CD8-positive, alpha-beta T cell (primary cell): ENCODE measurements at regions of chr2 and their contacts with region 1.

Region 1: GRCh38 chr2:11129598-11130449 is 25.4 kb upstream of the SLC66A3 start:
- DNase-seq: peak; percentile 53 to 90 (median 81)
- ATAC-seq: peak; percentile 90
- H3K4me3 ChIP-seq: peak overlapping the region; percentile 42 to 49
- H3K4me3 Mint-ChIP-seq: peak overlapping the region; percentile 80
- H3K27ac ChIP-seq: peak overlapping the region in 1 of 2 experiments; percentile 61
- H3K27ac Mint-ChIP-seq: peak overlapping the region; percentile 88
- H3K4me1 ChIP-seq: peaks cover 23% of the 10 kb centered on the region
- H3K4me1 Mint-ChIP-seq: peaks cover 29% of the 10 kb centered on the region
- H3K27me3 ChIP-seq: no peaks in the 10 kb centered on the region
- H3K27me3 Mint-ChIP-seq: no peaks in the 10 kb centered on the region
- CTCF ChIP-seq: peak; percentile 36

Region 2: DNA sequence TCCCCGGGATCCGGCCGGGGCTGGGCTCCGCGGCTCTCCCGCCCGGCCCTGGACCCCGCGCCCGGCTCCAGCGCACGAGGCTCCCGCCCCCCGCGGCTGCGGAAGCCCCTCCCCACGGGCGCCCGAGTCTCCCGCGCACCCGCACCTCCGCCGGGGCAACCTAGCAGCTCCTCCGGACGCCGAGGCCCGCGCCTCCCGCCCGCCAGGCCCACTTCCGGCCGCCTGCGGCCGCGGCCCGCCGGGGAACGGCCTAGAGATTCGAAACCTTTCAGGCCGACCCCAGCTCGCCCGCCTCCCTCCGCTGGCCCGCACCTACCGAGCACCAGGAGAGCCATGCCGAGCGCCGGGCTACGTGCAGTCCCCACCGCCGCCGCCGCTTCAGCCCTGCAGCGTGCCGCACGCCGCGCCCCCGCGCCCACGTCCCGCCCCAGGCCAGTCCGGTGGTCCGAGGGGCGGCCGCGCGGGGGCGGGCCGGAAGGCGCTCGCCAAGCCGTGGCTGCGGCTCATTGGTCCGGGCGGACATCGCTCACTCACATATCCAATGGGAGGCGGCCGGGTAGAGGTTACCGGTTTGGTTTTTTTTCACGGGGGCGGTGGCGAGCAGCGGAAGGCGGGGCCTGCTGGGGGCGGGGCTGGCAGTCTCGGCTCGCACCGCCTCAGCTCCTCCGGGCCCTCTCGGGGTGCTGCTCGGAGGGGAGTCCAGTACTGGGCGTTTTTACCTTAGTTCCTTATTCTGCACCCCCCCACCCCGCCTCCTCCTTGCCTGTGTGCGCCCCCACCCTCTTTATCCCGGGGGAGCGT is 317.3 kb before region 1 on chr2 and contains the start of gene PDIA6:
- CTCF ChIA-PET with region 1: interaction called, 11 read pairs
- POLR2A ChIA-PET with region 1: interaction called, 5 read pairs
- intact Hi-C with region 1: loop called (anchors 1 to 5 kb)
- DNase-seq: peak; percentile 89 to 96 (median 93)
- ATAC-seq: peak; percentile 90
- H3K4me3 ChIP-seq: peak within 1 kb of the TSS; percentile 65 to 84
- H3K4me3 Mint-ChIP-seq: peak within 1 kb of the TSS; percentile 91
- H3K27ac ChIP-seq: peak within 1 kb of the TSS; percentile 56 to 73
- H3K27ac Mint-ChIP-seq: peak within 1 kb of the TSS; percentile 86
- H3K4me1 ChIP-seq: peaks cover 27% of the 10 kb centered on the region
- H3K4me1 Mint-ChIP-seq: peaks cover 41% of the 10 kb centered on the region
- H3K27me3 ChIP-seq: no peaks in the 10 kb centered on the region
- H3K27me3 Mint-ChIP-seq: peaks cover 1% of the 10 kb centered on the region
- CTCF ChIP-seq: no peak
- total RNA-seq, gene PDIA6: 24.4 to 24.8 TPM

Region 3: DNA sequence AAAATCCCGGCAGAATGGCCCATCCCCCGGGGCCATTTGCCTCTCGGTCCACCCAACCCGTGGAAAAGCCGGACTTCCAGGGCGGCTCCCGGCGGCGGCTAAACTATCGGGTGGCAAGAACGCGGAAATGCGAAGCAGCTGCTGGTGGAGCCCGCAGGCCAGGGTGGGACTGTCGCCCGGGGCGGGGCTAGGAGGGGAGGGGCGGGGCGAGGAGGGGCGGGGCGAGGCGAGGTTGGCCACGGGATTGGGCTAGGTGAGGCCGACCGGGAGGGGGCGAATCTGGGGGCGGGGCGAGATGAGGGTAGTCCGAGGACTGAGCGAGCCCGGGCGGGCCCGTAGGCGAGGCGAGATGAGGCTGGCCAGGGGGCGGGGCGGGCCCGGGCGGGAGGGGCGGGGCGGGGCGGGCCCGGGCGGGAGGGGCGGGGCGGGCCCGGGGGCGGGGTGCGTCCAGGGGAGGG is 25.1 kb after region 1 on chr2:
- CTCF ChIA-PET with region 1: interaction called, 22 read pairs
- POLR2A ChIA-PET with region 1: interaction called, 22 read pairs
- intact Hi-C with region 1: loop called (anchors 1 kb)
- DNase-seq: peak; percentile 96 to 99 (median 98)
- ATAC-seq: peak; percentile 91
- H3K4me3 ChIP-seq: peak overlapping the region; percentile 55 to 57
- H3K4me3 Mint-ChIP-seq: peak overlapping the region; percentile 80
- H3K27ac ChIP-seq: peak overlapping the region; percentile 68 to 78
- H3K27ac Mint-ChIP-seq: peak overlapping the region; percentile 85
- H3K4me1 ChIP-seq: peaks cover 18% of the 10 kb centered on the region
- H3K4me1 Mint-ChIP-seq: peaks cover 20% of the 10 kb centered on the region
- H3K27me3 ChIP-seq: no peaks in the 10 kb centered on the region
- H3K27me3 Mint-ChIP-seq: no peaks in the 10 kb centered on the region
- CTCF ChIP-seq: no peak

Region 4: GRCh38 chr2:11175293-11175795 is 45.5 kb after region 1 on chr2:
- CTCF ChIA-PET with region 1: no interaction called
- POLR2A ChIA-PET with region 1: no interaction called
- intact Hi-C with region 1: no loop called
- DNase-seq: no peak
- ATAC-seq: no peak
- H3K4me3 ChIP-seq: no peak overlapping the region
- H3K4me3 Mint-ChIP-seq: no peak overlapping the region
- H3K27ac ChIP-seq: no peak overlapping the region
- H3K27ac Mint-ChIP-seq: peak overlapping the region; percentile 13
- H3K4me1 ChIP-seq: peaks cover 7% of the 10 kb centered on the region
- H3K4me1 Mint-ChIP-seq: peaks cover 11% of the 10 kb centered on the region
- H3K27me3 ChIP-seq: no peaks in the 10 kb centered on the region
- H3K27me3 Mint-ChIP-seq: no peaks in the 10 kb centered on the region
- CTCF ChIP-seq: no peak

Region 5: DNA sequence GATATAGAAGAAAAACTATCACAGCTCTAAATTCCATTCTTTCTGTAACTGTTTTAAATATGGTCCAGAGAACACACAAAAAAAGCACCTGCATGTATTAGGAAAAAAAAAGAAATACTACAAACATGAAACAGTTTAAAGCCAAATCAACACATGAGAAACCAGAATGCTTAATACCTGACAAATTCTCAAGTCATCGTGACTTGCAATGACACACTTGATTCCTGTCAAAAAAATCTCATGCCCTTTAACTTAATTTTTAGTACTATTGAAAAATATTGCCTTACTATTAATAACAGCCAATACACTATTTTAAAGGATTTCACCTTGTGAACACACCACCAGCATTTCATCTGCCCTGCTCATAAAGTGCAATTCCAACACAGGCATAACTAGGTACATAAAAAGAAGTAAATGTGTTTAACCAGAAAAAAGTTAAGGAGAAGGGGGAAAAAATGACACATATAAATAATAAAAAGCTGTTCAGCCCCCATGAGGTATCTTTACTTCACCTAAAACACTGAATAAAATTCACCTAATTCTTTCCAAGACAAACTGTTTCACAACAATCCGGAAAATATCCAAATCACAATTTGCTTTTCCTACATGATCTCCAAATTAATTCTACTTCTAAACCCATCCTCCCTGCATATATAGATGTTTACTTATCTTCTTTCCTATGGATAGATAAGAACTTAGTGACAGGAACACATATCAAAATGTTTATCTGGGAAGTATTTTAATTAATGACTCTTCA is 203.8 kb after region 1 on chr2:
- CTCF ChIA-PET with region 1: no interaction called
- POLR2A ChIA-PET with region 1: no interaction called
- intact Hi-C with region 1: no loop called
- DNase-seq: no peak
- ATAC-seq: no peak
- H3K4me3 ChIP-seq: no peak overlapping the region
- H3K4me3 Mint-ChIP-seq: no peak overlapping the region
- H3K27ac ChIP-seq: no peak overlapping the region
- H3K27ac Mint-ChIP-seq: no peak overlapping the region
- H3K4me1 ChIP-seq: no peaks in the 10 kb centered on the region
- H3K4me1 Mint-ChIP-seq: peaks cover 12% of the 10 kb centered on the region
- H3K27me3 ChIP-seq: no peaks in the 10 kb centered on the region
- H3K27me3 Mint-ChIP-seq: no peaks in the 10 kb centered on the region
- CTCF ChIP-seq: no peak

Region 6: GRCh38 chr2:11344342-11344955 is 214.6 kb after region 1 on chr2 and contains the start of gene ROCK2:
- CTCF ChIA-PET with region 1: interaction called, 16 read pairs
- POLR2A ChIA-PET with region 1: interaction called, 4 read pairs
- intact Hi-C with region 1: loop called (anchors 1 to 5 kb)
- DNase-seq: peak; percentile 28 to 81 (median 62)
- ATAC-seq: peak; percentile 61
- H3K4me3 ChIP-seq: peak within 1 kb of the TSS; percentile 79 to 85
- H3K4me3 Mint-ChIP-seq: peak within 1 kb of the TSS; percentile 95
- H3K27ac ChIP-seq: peak within 1 kb of the TSS; percentile 37 to 43
- H3K27ac Mint-ChIP-seq: peak within 1 kb of the TSS; percentile 90
- H3K4me1 ChIP-seq: peaks cover 12% of the 10 kb centered on the region
- H3K4me1 Mint-ChIP-seq: peaks cover 42% of the 10 kb centered on the region
- H3K27me3 ChIP-seq: no peaks in the 10 kb centered on the region
- H3K27me3 Mint-ChIP-seq: no peaks in the 10 kb centered on the region
- CTCF ChIP-seq: no peak
- total RNA-seq, gene ROCK2: 4.1 to 5.7 TPM

Region 7: GRCh38 chr2:11465497-11466406 is 335.9 kb after region 1 on chr2 and contains the start of gene E2F6:
- CTCF ChIA-PET with region 1: interaction called, 33 read pairs
- POLR2A ChIA-PET with region 1: no interaction called
- intact Hi-C with region 1: loop called in 1 of 2 experiments (anchors 5 kb)
- DNase-seq: peak; percentile 68 to 91 (median 81)
- ATAC-seq: peak; percentile 85
- H3K4me3 ChIP-seq: peak within 1 kb of the TSS; percentile 83 to 87
- H3K4me3 Mint-ChIP-seq: peak within 1 kb of the TSS; percentile 96
- H3K27ac ChIP-seq: peak within 1 kb of the TSS; percentile 51 to 70
- H3K27ac Mint-ChIP-seq: peak within 1 kb of the TSS; percentile 91
- H3K4me1 ChIP-seq: peaks cover 13% of the 10 kb centered on the region
- H3K4me1 Mint-ChIP-seq: peaks cover 37% of the 10 kb centered on the region
- H3K27me3 ChIP-seq: no peaks in the 10 kb centered on the region
- H3K27me3 Mint-ChIP-seq: no peaks in the 10 kb centered on the region
- CTCF ChIP-seq: no peak
- total RNA-seq, gene E2F6: 4.9 to 5.0 TPM

Region 8: DNA sequence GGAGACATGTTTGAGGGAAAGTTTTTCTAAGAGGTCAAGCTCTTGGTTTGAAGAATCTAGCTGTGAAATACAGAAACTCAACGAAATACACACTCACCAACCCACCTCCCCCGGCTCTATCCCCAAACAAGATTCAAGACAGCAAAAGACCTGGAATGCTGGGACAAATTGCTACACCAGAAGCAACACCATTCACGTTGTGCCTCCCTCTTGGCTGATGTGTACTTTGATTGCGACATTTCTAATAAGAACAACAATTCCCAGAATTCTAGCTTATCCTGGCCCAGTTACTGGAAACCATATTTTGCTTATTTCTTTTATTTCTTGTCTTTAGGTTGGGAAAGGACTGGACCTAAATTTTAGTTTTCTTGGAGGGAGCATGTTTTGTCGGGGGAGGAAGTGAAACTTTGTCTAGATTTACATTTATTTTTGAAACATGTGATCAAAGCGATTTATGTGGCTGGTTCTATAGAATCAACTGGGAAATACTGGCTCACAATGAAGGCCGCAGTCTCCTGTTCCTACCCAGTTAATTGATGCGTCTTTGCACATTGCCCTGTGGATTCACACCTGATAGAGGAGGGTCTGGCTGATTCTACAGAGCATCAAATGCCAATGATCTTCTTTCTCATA is 587.0 kb after region 1 on chr2:
- CTCF ChIA-PET with region 1: no interaction called
- POLR2A ChIA-PET with region 1: no interaction called
- intact Hi-C with region 1: no loop called
- DNase-seq: no peak
- ATAC-seq: no peak
- H3K4me3 ChIP-seq: no peak overlapping the region
- H3K4me3 Mint-ChIP-seq: no peak overlapping the region
- H3K27ac ChIP-seq: no peak overlapping the region
- H3K27ac Mint-ChIP-seq: no peak overlapping the region
- H3K4me1 ChIP-seq: peaks cover 5% of the 10 kb centered on the region
- H3K4me1 Mint-ChIP-seq: peaks cover 4% of the 10 kb centered on the region
- H3K27me3 ChIP-seq: no peaks in the 10 kb centered on the region
- H3K27me3 Mint-ChIP-seq: peaks cover 16% of the 10 kb centered on the region
- CTCF ChIP-seq: no peak

Region 9: DNA sequence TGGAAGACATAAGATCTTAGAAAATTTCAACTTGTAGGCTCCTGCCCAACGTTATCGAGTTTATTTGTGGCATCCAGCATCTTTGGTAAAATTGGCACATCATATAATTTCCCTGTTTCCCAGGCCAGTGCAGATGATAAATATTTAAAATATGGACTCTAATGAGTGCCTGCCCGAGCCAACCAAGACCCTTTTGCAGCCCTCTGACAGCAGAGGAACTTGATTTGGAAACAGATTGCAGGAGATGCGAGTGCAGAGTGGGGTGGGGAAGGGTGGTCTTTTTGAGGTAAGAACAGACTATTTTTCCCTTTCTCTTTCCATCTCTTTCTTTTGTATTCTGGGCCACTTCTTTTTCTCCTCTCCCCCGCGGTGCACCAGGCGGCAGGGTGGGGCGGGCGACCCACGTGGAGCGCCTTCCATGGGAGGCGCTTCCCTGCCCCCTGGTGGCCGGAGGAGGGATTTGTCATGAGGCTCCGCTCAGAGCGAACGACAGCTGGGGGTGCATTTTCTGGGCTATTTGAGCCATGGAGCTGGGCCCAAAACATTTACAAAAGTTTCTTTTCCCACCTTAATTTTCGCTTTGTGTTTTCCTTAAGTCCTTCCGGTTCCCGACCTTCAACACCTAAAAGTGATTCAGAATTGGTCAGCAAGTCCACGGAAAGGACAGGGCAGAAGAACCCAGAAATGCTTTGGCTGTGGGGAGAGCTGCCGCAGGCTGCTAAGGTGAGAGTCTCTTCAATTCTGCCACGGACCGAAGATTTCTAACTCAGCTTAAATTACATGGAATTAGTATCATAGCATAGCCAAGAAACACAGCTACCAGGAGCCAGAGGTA is 649.3 kb after region 1 on chr2:
- CTCF ChIA-PET with region 1: interaction called, 11 read pairs
- POLR2A ChIA-PET with region 1: no interaction called
- intact Hi-C with region 1: loop called in 1 of 2 experiments (anchors 10 kb)
- DNase-seq: peak; percentile 70 to 93 (median 88)
- ATAC-seq: peak; percentile 96
- H3K4me3 ChIP-seq: peak overlapping the region in 1 of 2 experiments; percentile 24
- H3K4me3 Mint-ChIP-seq: peak overlapping the region; percentile 23
- H3K27ac ChIP-seq: peak overlapping the region in 1 of 2 experiments; percentile 40
- H3K27ac Mint-ChIP-seq: peak overlapping the region; percentile 6
- H3K4me1 ChIP-seq: peaks cover 21% of the 10 kb centered on the region
- H3K4me1 Mint-ChIP-seq: peaks cover 37% of the 10 kb centered on the region
- H3K27me3 ChIP-seq: no peaks in the 10 kb centered on the region
- H3K27me3 Mint-ChIP-seq: no peaks in the 10 kb centered on the region
- CTCF ChIP-seq: peak; percentile 93